AG04449 (cell line): ENCODE measurements at regions of chr2 and their contacts with region 1.

Region 1: GRCh38 chr2:134411828-134412638 is 158.2 kb downstream of the MGAT5 start:
- DNase-seq: no peak
- H3K4me3 ChIP-seq: no peak overlapping the region
- CTCF ChIP-seq: peak; percentile 86

Region 2: DNA sequence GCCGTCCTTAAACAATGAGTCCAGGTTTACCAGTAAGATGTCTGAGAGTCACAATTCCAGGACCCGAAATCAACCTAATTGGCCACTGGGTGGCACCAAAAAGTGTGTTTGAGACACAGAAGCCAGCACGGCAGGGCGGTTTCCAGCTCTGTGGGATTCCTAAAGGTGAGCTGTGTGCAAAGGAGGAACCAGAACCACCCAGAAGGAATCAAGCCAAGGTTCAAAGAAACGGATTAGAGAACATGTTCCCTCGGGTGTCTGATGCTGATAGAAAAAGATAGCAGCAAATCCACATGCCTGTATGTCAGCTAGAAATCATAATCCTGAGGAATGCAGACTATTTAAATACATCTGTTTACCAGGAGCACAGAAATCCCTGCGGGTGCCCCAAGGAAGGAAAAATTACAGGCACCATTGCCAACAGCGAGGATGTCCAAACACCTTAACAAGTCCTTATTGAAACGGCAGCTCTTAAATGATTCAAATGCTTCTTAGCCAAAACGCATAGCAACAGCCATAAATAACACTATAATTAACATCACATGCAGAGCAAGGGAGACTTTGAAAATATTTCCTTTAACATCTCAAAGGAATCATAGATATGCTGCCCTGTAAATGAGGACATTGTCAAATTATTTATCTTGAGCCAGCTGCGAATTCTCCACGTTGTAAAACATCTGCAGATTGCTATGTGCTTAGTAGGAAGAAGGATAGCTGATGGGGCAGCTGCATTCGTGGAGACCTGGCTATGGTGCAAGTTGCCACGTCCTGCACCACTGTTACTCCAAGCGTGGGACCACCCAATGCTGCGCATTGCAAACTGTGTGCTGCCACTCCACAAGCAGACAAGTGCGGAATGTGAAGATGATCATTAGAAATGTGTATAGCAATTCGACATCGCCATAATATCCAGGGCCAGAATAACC is 525.0 kb before region 1 on chr2:
- CTCF ChIA-PET with region 1: interaction called, 60 read pairs
- POLR2A ChIA-PET with region 1: interaction called, 3 read pairs
- DNase-seq: peak; percentile 70
- H3K4me3 ChIP-seq: 0 out of 2 replicates have a peak overlapping the region, but pooled peaks have one; percentile 13
- CTCF ChIP-seq: peak; percentile 60

Region 3: DNA sequence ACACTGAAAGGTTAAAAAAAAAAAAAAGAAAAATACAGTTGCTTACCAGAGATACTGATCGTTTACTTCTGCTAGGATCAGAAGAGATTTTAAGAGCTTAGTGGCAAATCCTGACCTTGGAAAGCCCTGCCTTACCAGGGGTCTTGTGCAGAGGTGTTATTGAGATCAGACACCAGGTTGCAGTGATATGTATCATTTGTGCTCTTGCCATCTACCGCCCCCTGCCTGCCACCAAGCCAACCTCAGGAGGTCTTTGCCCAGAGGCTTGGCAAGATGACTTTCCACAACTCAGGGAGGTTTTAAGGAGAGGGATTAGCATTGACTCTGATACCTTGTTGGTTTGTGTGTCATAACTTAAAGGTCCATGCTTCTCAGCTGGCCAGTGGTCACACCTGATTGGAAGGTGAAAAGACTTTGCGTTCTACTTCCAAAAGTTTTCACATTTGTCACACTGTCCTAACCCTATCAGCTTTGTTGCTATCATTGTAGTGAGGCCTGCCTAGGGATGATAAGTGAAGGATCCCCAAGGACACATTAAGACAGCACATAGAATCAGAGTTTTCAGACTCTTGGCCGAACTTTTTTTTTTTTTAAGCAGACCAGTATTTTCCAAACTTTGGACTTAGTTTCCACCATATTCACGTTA is 204.3 kb before region 1 on chr2:
- CTCF ChIA-PET with region 1: interaction called, 11 read pairs
- POLR2A ChIA-PET with region 1: no interaction called
- DNase-seq: no peak
- H3K4me3 ChIP-seq: no peak overlapping the region
- CTCF ChIP-seq: peak; percentile 61

Region 4: DNA sequence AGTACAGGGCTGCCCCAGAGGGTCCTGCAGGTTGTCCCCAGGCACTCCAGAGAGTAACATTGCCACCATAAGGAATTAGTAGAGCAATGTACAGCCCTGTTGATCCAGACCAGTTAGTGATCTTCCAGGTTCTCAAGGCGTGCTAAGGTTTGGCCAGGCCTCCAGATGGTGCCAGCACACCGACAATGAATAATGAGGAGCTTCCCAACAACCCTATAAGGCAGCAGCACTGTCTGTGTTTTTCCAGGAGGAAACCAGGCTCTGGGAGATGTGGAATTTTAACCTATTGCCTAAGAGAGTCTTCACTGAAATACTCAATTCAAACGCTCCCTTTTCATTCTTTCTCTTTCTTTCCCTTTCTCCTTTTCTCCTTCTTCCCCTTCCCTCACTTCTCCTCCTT is 36.1 kb before region 1 on chr2:
- CTCF ChIA-PET with region 1: interaction called, 147 read pairs
- POLR2A ChIA-PET with region 1: no interaction called
- DNase-seq: no peak
- H3K4me3 ChIP-seq: no peak overlapping the region
- CTCF ChIP-seq: peak; percentile 70

Region 5: GRCh38 chr2:134425724-134426496 is 13.9 kb after region 1 on chr2:
- CTCF ChIA-PET with region 1: interaction called, 28 read pairs
- POLR2A ChIA-PET with region 1: no interaction called
- DNase-seq: no peak
- H3K4me3 ChIP-seq: no peak overlapping the region
- CTCF ChIP-seq: no peak

Region 6: GRCh38 chr2:134431838-134432434 is 19.9 kb after region 1 on chr2:
- CTCF ChIA-PET with region 1: interaction called, 28 read pairs
- POLR2A ChIA-PET with region 1: no interaction called
- DNase-seq: no peak
- H3K4me3 ChIP-seq: no peak overlapping the region
- CTCF ChIP-seq: no peak

Region 7: GRCh38 chr2:135198481-135198880 is 786.4 kb after region 1 on chr2:
- CTCF ChIA-PET with region 1: no interaction called
- POLR2A ChIA-PET with region 1: no interaction called
- DNase-seq: no peak
- H3K4me3 ChIP-seq: no peak overlapping the region
- CTCF ChIP-seq: no peak